Adrenal gland (tissue), 19 donors: ENCODE measurements at regions of chr3 and their contacts with region 1.

Region 1: DNA sequence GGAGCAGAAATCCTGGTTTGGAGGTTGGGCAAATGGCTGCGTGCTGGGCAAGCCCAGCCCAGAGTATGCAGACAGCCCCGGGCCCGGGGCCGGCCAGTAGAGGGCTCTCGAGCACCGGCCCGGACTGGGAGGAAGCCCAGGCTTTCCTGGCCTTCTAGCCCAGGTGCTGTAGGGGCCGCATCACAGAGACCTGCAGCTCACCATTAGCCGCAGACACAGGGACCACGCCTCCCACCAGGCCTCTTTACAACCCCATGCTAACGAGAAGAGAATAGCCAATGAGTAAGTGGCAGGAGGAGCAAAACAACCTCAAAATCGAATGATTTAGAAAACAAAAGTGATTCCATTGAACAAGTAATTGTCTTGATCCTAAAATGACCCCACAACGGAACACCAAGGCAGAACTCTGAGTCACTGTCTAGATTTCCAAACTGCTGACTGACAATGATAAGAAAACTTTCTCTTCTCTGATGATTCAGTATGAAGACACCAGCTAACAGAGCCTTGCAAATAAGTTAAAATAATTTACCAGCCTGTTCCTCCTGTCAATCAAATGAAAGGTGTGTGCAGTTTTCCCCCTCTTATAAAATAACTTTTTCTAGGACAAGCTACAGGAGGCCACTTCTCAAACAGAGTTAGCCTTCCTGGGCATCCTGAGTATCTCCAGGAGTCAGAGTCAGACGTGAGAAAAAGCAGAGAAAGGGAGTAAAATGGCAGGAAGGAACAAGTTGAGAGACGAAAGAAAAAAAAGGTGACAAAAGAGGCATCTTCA is 102.2 kb downstream of the DGKG start:
- DNase-seq: peak; percentile 77 to 87 (median 81)
- H3K4me3 ChIP-seq: peak overlapping the region in 1 of 4 donors; percentile 12
- H3K27ac ChIP-seq: peak overlapping the region; percentile 22 to 82 (median 62)
- H3K4me1 ChIP-seq: peaks cover 4 to 12% of the 10 kb centered on the region in 2 donors
- H3K27me3 ChIP-seq: no peaks in the 10 kb centered on the region
- CTCF ChIP-seq: peak; percentile 64 to 83 (median 76)
- POLR2A ChIP-seq: peak in 1 of 2 donors; percentile 51

Region 2: DNA sequence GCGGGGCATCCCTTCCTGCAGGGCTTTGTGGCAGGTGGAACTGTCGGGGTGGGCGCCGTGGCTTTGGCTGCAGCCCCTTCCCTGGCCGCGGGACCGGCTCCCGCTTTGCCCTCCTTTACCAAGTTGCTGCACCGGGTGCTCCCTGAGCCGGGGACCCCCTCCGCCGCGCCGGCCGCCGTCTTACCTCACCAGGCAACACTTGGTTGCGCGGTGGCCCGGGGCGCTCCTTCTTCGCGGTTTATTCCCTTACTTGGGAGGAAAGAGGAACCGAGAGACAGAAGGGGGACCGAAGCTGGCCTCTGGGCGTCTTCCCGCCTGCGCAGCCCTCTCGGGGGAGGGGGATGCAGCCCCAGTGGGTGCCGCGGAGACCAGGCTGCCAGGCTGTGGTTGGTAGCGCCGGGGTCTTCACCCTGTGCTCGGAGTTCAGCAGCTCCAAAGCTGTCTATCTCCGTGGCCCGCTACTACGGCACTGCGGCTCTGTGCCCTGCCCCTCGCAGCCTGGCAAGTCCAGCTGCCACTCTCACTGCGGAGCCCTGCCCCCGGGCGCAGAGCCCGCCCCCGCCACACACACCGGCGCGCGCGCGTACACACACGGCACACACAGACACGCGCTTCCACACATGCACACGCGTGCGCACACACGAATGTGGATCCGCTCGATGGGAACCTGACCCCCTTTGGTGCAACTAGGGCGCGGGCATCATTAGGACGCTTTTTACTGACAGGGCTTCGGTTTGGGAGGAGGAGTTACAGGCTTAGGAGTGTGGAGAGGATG is 102.2 kb after region 1 on chr3 and contains the start of gene DGKG:
- intact Hi-C with region 1: no loop called
- DNase-seq: peak in 6 of 7 donors; percentile 31 to 69 (median 42)
- H3K4me3 ChIP-seq: peak within 1 kb of the TSS in 2 of 4 donors; percentile 22 to 53
- H3K27ac ChIP-seq: peak within 1 kb of the TSS in 3 of 5 donors; percentile 1 to 46 (median 42)
- H3K4me1 ChIP-seq: peaks cover 8 to 27% of the 10 kb centered on the region in 2 donors
- H3K27me3 ChIP-seq: peaks cover 28% of the 10 kb centered on the region
- CTCF ChIP-seq: no peak
- POLR2A ChIP-seq: peak in 1 of 2 donors; percentile 12
- total RNA-seq, gene DGKG: 16.0 to 43.7 (median 29.3) TPM

Region 3: GRCh38 chr3:186381424-186382216 is 121.8 kb after region 1 on chr3:
- intact Hi-C with region 1: no loop called
- DNase-seq: no peak
- H3K4me3 ChIP-seq: no peak overlapping the region
- H3K27ac ChIP-seq: no peak overlapping the region
- H3K4me1 ChIP-seq: no peaks in the 10 kb centered on the region
- H3K27me3 ChIP-seq: no peaks in the 10 kb centered on the region
- CTCF ChIP-seq: no peak
- POLR2A ChIP-seq: no peak

Region 4: GRCh38 chr3:186534113-186534669 is 274.4 kb after region 1 on chr3:
- intact Hi-C with region 1: loop called in 1 of 2 experiments (anchors 10 kb)
- DNase-seq: no peak
- H3K4me3 ChIP-seq: no peak overlapping the region
- H3K27ac ChIP-seq: no peak overlapping the region
- H3K4me1 ChIP-seq: peaks cover 0 to 14% of the 10 kb centered on the region in 2 donors
- H3K27me3 ChIP-seq: no peaks in the 10 kb centered on the region
- CTCF ChIP-seq: no peak
- POLR2A ChIP-seq: no peak

Region 5: GRCh38 chr3:186540221-186540834 is 280.5 kb after region 1 on chr3:
- intact Hi-C with region 1: loop called (anchors 5 to 10 kb)
- DNase-seq: peak; percentile 74 to 93 (median 80)
- H3K4me3 ChIP-seq: peak overlapping the region in 1 of 4 donors; percentile 14
- H3K27ac ChIP-seq: no peak overlapping the region
- H3K4me1 ChIP-seq: peaks cover 9 to 34% of the 10 kb centered on the region in 2 donors
- H3K27me3 ChIP-seq: no peaks in the 10 kb centered on the region
- CTCF ChIP-seq: peak; percentile 66 to 88 (median 82)
- POLR2A ChIP-seq: no peak

Region 6: GRCh38 chr3:187016639-187017345 is 757.0 kb after region 1 on chr3:
- intact Hi-C with region 1: no loop called
- DNase-seq: peak in 2 of 7 donors; percentile 14 to 19
- H3K4me3 ChIP-seq: no peak overlapping the region
- H3K27ac ChIP-seq: peak overlapping the region in 1 of 5 donors; percentile 45
- H3K4me1 ChIP-seq: peaks cover 0 to 15% of the 10 kb centered on the region in 2 donors
- H3K27me3 ChIP-seq: no peaks in the 10 kb centered on the region
- CTCF ChIP-seq: no peak
- POLR2A ChIP-seq: no peak